ENCODE measurements at regions of chr4 and their contacts with region 1.

Region 1: DNA sequence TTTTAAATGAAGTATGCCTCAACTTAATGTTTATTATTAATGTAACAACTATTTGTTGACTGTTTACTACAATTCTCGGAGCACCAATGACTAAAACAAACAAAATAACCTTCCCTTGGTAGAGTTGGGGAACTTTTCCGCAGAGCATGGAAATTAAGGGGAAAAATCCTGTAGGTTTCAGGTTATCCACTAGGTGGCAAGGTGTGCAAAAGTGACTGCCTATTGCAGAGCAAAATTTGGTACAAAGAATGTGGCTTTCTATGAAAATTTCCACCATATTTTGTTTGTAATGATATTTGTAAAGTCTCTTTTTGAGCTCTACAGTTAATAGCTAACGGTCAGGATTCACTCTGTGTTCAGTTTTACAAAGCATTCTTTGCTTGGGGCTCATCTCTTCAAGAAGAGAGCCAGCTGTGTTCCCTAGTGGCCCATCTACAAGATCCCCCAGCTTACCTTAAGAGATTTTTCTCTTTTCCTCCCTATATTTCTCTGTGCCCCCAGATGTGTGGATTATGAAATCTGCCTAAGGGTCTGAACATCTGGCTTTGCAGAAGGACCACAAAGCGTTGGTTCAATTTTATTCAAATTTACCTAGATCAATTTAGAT is 61.1 kb downstream of the FBXO8 start:
- DNase-seq: peak; percentile 26
- CTCF ChIP-seq: peak; percentile 62

Region 2: DNA sequence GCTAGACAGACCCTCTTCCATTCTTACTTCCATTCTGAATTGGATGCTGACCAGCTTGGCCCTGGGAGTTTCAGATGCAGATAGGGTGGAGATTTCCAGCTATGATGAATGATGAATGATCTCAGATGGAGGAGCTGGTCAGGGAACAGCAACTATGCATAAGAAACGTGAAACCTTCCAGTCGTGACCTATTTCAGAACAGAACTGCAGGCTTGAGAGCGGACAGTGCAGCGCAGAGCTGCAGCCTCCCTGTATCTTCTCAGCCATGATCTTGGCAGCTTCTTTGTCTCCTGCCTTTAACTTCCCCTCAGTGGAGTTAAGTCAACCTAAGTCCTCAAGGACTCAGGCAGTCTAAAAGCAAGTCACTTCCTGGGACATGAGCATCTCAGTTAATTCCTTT is 649.1 kb before region 1 on chr4:
- CTCF ChIA-PET with region 1: no interaction called
- POLR2A ChIA-PET with region 1: no interaction called
- DNase-seq: no peak
- CTCF ChIP-seq: no peak

Region 3: DNA sequence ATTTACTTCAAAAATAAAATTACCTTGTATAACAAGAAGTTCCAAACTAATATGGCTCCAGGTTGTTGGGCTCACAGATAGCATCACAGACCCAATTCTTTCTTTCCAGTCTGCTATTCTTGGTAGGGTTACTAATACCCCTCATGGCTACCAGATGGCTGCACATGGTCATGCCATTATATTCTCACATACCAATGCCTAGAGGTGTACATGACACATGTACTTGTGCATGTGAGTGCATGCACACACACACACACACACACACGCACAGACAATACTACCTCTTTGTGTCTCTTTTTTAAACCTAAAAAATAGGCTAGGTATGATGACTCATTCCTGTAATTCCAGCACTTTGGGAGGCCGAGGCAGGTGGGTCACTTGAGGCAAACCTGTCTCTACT is 30.0 kb after region 1 on chr4:
- CTCF ChIA-PET with region 1: interaction called, 11 read pairs
- POLR2A ChIA-PET with region 1: no interaction called
- DNase-seq: no peak
- CTCF ChIP-seq: no peak

Region 4: GRCh38 chr4:174273930-174274329 is 51.6 kb after region 1 on chr4:
- CTCF ChIA-PET with region 1: no interaction called
- POLR2A ChIA-PET with region 1: no interaction called
- DNase-seq: no peak
- CTCF ChIP-seq: no peak

Measured in GM10248 (cell line).